ENCODE measurements at regions of chr16 and their contacts with region 1.

Region 1: GRCh38 chr16:4586291-4586690 is 28.4 kb downstream of the UBALD1 start:
- DNase-seq: no peak
- H3K4me3 ChIP-seq: no peak overlapping the region
- H3K27ac ChIP-seq: no peak overlapping the region
- H3K4me1 ChIP-seq: no peaks in the 10 kb centered on the region
- H3K27me3 ChIP-seq: no peaks in the 10 kb centered on the region
- CTCF ChIP-seq: no peak
- EP300 ChIP-seq: no peak
- RAD21 ChIP-seq: no peak

Region 2: DNA sequence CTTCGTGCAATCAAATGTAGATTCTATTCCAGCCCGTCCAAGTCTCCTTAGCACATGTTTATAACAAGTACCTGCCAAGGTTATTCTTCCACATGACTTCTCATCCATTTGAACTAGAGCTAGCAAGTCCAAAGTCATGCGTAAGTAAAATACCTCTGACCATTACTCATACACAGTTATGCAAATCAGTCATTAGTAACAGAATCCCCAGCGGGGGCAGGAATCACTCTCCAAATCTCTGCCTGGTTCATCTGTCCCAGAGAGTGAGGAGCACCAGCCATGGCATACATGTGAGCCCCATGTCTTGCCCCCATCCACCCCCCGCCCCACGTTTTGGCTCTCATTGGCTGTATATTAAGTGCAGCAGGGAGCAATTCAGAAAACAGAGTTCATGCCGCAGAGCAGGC is 372.1 kb before region 1 on chr16:
- CTCF ChIA-PET with region 1: no interaction called
- POLR2A ChIA-PET with region 1: no interaction called
- DNase-seq: no peak
- H3K4me3 ChIP-seq: no peak overlapping the region
- H3K27ac ChIP-seq: peak overlapping the region in 1 of 2 experiments; percentile 13; a peak in 1 of 4 replicates
- H3K4me1 ChIP-seq: peaks cover 8 to 10% of the 10 kb centered on the region in 2 experiments; a peak in 2 of 4 replicates
- H3K27me3 ChIP-seq: no peaks in the 10 kb centered on the region
- CTCF ChIP-seq: no peak
- EP300 ChIP-seq: no peak
- RAD21 ChIP-seq: no peak

Region 3: GRCh38 chr16:4288148-4288921 is 298.0 kb before region 1 on chr16:
- CTCF ChIA-PET with region 1: no interaction called
- POLR2A ChIA-PET with region 1: no interaction called
- DNase-seq: peak; percentile 91
- H3K4me3 ChIP-seq: no peak overlapping the region
- H3K27ac ChIP-seq: no peak overlapping the region
- H3K4me1 ChIP-seq: peaks cover 0 to 10% of the 10 kb centered on the region in 2 experiments; a peak in 1 of 4 replicates
- H3K27me3 ChIP-seq: no peaks in the 10 kb centered on the region
- CTCF ChIP-seq: peak; percentile 95
- EP300 ChIP-seq: no peak
- RAD21 ChIP-seq: peak; percentile 83

Region 4: DNA sequence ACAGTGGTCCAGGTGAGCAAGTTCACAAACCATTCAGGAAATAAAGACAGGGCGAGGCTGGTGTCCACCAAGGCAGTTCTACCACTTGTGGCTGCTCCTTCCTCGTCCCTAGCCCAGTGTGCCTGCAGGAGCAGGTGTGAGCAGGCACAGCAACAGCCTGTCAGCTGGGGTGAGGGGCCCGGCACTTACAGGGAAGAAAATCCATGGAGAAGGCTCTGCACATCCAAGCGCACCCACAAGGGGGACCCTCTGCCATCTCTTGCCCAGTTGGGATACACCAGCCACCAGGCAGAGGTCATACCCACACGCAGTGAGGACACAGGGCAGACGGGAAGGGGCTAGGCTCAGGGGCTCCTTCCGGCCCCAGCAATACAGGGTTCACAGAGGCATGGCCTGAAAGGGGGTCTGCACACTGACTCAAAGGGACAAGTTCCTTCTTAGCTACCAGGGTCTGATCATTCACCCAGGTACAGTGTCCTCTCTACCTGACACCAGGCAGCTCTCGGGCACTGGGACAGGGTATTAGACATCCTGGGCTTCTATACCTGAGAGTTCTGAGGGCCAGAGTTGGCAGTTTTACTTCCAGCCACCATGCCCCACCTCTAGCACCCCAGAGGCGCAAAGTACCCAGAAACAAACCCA is 74.7 kb before region 1 on chr16:
- CTCF ChIA-PET with region 1: interaction called, 64 read pairs
- POLR2A ChIA-PET with region 1: no interaction called
- DNase-seq: peak; percentile 77
- H3K4me3 ChIP-seq: no peak overlapping the region
- H3K27ac ChIP-seq: no peak overlapping the region
- H3K4me1 ChIP-seq: no peaks in the 10 kb centered on the region; a peak in 1 of 4 replicates
- H3K27me3 ChIP-seq: no peaks in the 10 kb centered on the region
- CTCF ChIP-seq: peak; percentile 56
- EP300 ChIP-seq: no peak
- RAD21 ChIP-seq: peak; percentile 65

Region 5: DNA sequence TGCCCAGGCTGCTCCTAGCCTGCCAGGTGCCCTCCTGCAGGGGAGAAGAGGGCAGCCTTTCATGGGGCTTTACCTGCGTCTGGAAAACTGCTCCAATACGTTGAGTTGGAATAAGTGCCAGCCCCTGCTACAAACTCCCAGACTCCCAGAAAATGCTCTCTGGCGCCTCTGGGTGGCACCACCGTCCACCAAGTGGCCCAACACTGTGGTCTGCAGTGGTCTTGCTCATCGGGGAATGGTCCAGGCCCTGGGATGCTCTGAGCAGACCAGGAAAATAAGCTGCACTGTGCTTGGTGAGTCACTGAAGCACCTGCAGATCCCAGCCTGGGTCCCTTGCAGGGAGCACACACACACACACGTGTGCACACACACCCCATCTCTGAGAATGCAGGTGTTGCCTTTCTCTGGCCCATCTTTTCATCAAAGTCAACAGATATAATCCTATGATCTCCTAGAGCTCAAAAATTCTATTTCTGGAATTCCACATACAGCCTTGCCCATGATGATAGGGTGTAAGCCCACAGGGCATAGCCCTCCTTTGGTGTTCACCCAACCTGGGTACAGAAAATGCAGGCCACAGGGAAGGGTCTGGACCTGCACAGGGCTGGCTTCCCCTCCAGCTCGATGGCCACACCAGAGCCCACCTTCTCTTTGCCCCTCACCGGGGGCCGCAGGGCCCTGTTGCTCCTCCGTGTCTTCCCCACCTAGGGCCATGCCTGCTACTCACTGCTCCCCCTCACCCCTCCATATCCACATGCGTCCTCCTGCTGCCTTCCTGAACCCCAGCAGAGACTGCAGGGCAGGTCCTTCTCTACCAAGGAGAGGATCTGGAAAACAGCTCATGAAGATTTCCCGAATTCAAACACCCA is 68.2 kb before region 1 on chr16:
- CTCF ChIA-PET with region 1: interaction called, 16 read pairs
- POLR2A ChIA-PET with region 1: no interaction called
- DNase-seq: peak; percentile 77
- H3K4me3 ChIP-seq: no peak overlapping the region; a peak in 1 of 4 replicates
- H3K27ac ChIP-seq: no peak overlapping the region
- H3K4me1 ChIP-seq: peaks cover 0 to 14% of the 10 kb centered on the region in 2 experiments; a peak in 1 of 4 replicates
- H3K27me3 ChIP-seq: no peaks in the 10 kb centered on the region
- CTCF ChIP-seq: peak; percentile 56
- EP300 ChIP-seq: no peak
- RAD21 ChIP-seq: peak; percentile 77

Region 6: GRCh38 chr16:4556112-4556511 is 30.2 kb before region 1 on chr16 and contains the start of gene C16orf96:
- CTCF ChIA-PET with region 1: interaction called, 10 read pairs
- POLR2A ChIA-PET with region 1: interaction called, 3 read pairs
- DNase-seq: no peak
- H3K4me3 ChIP-seq: no peak within 1 kb of the TSS
- H3K27ac ChIP-seq: no peak within 1 kb of the TSS
- H3K4me1 ChIP-seq: no peaks in the 10 kb centered on the region
- H3K27me3 ChIP-seq: no peaks in the 10 kb centered on the region; the same call in 1 of the 2 replicates
- CTCF ChIP-seq: no peak
- EP300 ChIP-seq: no peak
- RAD21 ChIP-seq: no peak
- polyA plus RNA-seq, gene C16orf96: 0.05 TPM in 2 replicates

Region 7: GRCh38 chr16:4561596-4561995 is 24.7 kb before region 1 on chr16:
- CTCF ChIA-PET with region 1: interaction called, 10 read pairs
- POLR2A ChIA-PET with region 1: no interaction called
- DNase-seq: no peak
- H3K4me3 ChIP-seq: no peak overlapping the region
- H3K27ac ChIP-seq: no peak overlapping the region
- H3K4me1 ChIP-seq: no peaks in the 10 kb centered on the region
- H3K27me3 ChIP-seq: no peaks in the 10 kb centered on the region
- CTCF ChIP-seq: no peak
- EP300 ChIP-seq: no peak
- RAD21 ChIP-seq: no peak

Region 8: DNA sequence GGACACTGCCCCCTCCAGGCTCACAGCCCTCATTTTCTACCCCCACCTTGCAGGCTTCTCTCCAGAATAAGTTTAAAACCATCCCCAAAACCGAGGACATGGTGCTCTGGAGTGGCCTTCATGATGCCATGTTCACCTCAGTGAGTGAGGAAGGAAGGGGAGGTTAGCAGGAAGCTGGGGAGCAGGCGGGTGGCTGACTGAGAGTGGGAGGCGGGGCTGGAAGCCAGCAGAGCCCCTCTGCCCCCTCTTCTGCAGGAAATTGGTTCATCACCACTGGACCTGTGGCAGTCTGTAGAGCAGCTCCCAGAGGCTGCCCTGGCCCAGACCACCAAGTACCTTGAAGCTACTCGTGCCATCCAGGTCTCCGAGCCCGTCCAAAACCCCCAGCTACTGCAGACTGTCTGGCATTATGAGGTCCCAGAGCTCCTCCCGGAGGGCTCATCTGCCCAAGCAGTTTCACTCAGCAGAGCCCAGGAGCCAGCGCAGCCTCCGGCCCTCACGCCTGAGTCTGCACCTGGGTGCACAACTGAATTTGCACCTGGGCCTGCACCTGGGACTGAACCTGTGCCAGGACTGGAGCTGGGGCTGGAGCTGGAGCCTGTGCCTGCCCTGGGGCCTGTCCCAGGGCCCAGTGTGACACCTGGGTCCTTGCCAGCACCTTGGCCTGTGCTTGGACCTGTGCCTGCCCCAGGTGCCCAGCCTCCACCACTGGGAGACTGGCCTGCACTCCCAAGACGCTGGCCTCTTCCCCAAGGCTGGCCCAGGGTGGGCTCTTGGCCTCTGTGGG is 11.2 kb before region 1 on chr16:
- CTCF ChIA-PET with region 1: interaction called, 17 read pairs
- POLR2A ChIA-PET with region 1: no interaction called
- DNase-seq: no peak
- H3K4me3 ChIP-seq: no peak overlapping the region
- H3K27ac ChIP-seq: no peak overlapping the region
- H3K4me1 ChIP-seq: no peaks in the 10 kb centered on the region
- H3K27me3 ChIP-seq: no peaks in the 10 kb centered on the region
- CTCF ChIP-seq: no peak
- EP300 ChIP-seq: no peak
- RAD21 ChIP-seq: no peak